Naive thymus-derived CD4-positive, alpha-beta T cell (primary cell): ENCODE measurements at regions of chr6 and their contacts with region 1.

Region 1: GRCh38 chr6:122033539-122034181 is 365.8 kb upstream of the HSF2 start:
- DNase-seq: peak in 6 of 9 donors; percentile 12 to 60 (median 53)
- ATAC-seq: peak; percentile 84
- H3K4me3 ChIP-seq: no peak overlapping the region
- H3K4me3 Mint-ChIP-seq: no peak overlapping the region
- H3K27ac ChIP-seq: no peak overlapping the region
- H3K27ac Mint-ChIP-seq: no peak overlapping the region
- H3K4me1 ChIP-seq: no peaks in the 10 kb centered on the region
- H3K4me1 Mint-ChIP-seq: peaks cover 0 to 12% (median 0%) of the 10 kb centered on the region in 7 donors
- H3K27me3 ChIP-seq: no peaks in the 10 kb centered on the region
- H3K27me3 Mint-ChIP-seq: peaks cover 0 to 5% (median 0%) of the 10 kb centered on the region in 5 donors

Region 2: GRCh38 chr6:121319112-121319553 is 714.5 kb before region 1 on chr6:
- CTCF ChIA-PET with region 1: interaction called, 4 read pairs
- POLR2A ChIA-PET with region 1: no interaction called
- intact Hi-C with region 1: loop called in 1 of 2 experiments (anchors 1 kb)
- DNase-seq: peak in 2 of 9 donors; percentile 4 to 17
- ATAC-seq: no peak
- H3K4me3 ChIP-seq: no peak overlapping the region
- H3K4me3 Mint-ChIP-seq: peak overlapping the region in 4 of 10 donors; percentile 46 to 62 (median 56)
- H3K27ac ChIP-seq: no peak overlapping the region
- H3K27ac Mint-ChIP-seq: no peak overlapping the region
- H3K4me1 ChIP-seq: no peaks in the 10 kb centered on the region
- H3K4me1 Mint-ChIP-seq: peaks cover 0 to 5% (median 0%) of the 10 kb centered on the region in 7 donors
- H3K27me3 ChIP-seq: no peaks in the 10 kb centered on the region
- H3K27me3 Mint-ChIP-seq: no peaks in the 10 kb centered on the region

Region 3: DNA sequence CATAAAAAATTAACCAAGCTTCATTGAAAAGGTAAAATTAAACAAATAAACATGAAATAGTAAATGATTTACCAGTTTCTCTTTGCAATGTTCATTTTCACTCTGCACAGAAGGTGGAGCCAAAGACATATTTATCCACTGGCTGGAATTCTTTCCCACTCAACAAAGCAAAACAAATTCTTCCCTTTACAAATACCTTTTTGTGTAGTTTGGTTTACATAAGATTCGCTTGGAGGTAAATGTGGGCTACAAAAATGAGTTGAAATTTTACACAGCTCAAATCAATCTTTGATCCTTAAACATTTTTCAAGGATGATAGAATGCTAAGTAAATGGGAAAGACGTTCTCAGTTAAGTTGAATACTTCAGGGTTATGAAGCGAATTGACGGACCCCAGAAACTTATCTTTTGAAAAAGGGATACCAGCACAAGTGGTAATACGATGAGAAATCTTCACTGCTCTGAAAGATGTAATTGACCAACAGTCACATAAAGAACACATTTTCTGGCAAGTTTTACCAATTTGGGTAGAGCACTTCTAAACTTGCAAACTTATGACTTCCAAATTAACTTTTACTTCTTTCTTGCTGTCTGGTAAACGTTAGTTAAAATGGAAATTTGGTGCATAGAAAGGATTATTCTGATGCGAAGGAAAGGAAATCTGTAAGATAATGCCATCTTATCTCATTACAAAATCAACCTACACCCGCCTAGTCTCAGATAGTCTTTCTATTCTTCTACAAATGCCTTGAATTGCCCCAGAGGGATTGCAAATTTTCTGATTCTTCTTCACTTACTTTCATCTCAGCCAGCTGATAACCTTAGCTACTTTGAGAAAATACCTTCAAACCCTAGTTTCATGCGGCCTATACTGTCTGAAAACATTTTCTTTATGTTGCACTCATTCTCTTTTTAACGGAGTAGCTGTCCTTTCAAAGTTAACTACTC is 602.9 kb before region 1 on chr6:
- CTCF ChIA-PET with region 1: interaction called, 10 read pairs
- POLR2A ChIA-PET with region 1: no interaction called
- intact Hi-C with region 1: loop called (anchors 1 kb)
- DNase-seq: no peak
- ATAC-seq: no peak
- H3K4me3 ChIP-seq: no peak overlapping the region
- H3K4me3 Mint-ChIP-seq: no peak overlapping the region
- H3K27ac ChIP-seq: no peak overlapping the region
- H3K27ac Mint-ChIP-seq: peak overlapping the region in 1 of 9 donors; percentile 2
- H3K4me1 ChIP-seq: no peaks in the 10 kb centered on the region
- H3K4me1 Mint-ChIP-seq: peaks cover 0 to 23% (median 12%) of the 10 kb centered on the region in 7 donors
- H3K27me3 ChIP-seq: no peaks in the 10 kb centered on the region
- H3K27me3 Mint-ChIP-seq: peaks cover 0 to 9% (median 0%) of the 10 kb centered on the region in 5 donors

Region 4: GRCh38 chr6:121849477-121849876 is 184.2 kb before region 1 on chr6:
- CTCF ChIA-PET with region 1: interaction called, 3 read pairs
- POLR2A ChIA-PET with region 1: no interaction called
- intact Hi-C with region 1: loop called in 1 of 2 experiments (anchors 1 kb)
- DNase-seq: peak in 6 of 9 donors; percentile 5 to 43 (median 36)
- ATAC-seq: peak; percentile 57
- H3K4me3 ChIP-seq: no peak overlapping the region
- H3K4me3 Mint-ChIP-seq: peak overlapping the region in 1 of 10 donors; percentile 20
- H3K27ac ChIP-seq: no peak overlapping the region
- H3K27ac Mint-ChIP-seq: peak overlapping the region in 1 of 9 donors; percentile 72
- H3K4me1 ChIP-seq: no peaks in the 10 kb centered on the region
- H3K4me1 Mint-ChIP-seq: peaks cover 0 to 28% (median 20%) of the 10 kb centered on the region in 7 donors
- H3K27me3 ChIP-seq: no peaks in the 10 kb centered on the region
- H3K27me3 Mint-ChIP-seq: peaks cover 0 to 8% (median 0%) of the 10 kb centered on the region in 5 donors

Region 5: DNA sequence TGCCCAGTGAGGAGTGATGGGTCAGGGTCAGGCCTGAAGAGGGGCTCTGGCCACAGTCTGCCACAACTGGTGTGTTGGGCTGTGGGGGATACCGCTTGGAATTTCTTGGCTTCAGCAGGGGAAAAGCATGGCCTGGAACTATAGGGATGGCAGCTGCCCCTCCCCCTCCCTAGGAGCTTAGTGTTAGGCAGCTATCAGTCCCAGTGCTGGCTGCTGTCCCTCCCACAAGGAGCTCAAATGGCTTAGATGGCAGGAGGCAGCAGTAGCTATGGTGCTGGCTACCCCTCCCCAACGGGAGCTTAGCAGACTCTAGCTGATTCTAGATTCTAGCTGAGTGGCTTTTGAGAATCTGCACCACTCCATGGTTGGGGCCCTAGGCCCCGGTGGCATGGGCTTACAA is 48.7 kb before region 1 on chr6:
- CTCF ChIA-PET with region 1: no interaction called
- POLR2A ChIA-PET with region 1: no interaction called
- intact Hi-C with region 1: no loop called
- DNase-seq: no peak
- ATAC-seq: no peak
- H3K4me3 ChIP-seq: no peak overlapping the region
- H3K4me3 Mint-ChIP-seq: no peak overlapping the region
- H3K27ac ChIP-seq: no peak overlapping the region
- H3K27ac Mint-ChIP-seq: no peak overlapping the region
- H3K4me1 ChIP-seq: no peaks in the 10 kb centered on the region
- H3K4me1 Mint-ChIP-seq: no peaks in the 10 kb centered on the region
- H3K27me3 ChIP-seq: no peaks in the 10 kb centered on the region
- H3K27me3 Mint-ChIP-seq: peaks cover 0 to 7% (median 0%) of the 10 kb centered on the region in 5 donors